GM10248 (cell line): ENCODE measurements at regions of chr11 and their contacts with region 1.

Region 1: DNA sequence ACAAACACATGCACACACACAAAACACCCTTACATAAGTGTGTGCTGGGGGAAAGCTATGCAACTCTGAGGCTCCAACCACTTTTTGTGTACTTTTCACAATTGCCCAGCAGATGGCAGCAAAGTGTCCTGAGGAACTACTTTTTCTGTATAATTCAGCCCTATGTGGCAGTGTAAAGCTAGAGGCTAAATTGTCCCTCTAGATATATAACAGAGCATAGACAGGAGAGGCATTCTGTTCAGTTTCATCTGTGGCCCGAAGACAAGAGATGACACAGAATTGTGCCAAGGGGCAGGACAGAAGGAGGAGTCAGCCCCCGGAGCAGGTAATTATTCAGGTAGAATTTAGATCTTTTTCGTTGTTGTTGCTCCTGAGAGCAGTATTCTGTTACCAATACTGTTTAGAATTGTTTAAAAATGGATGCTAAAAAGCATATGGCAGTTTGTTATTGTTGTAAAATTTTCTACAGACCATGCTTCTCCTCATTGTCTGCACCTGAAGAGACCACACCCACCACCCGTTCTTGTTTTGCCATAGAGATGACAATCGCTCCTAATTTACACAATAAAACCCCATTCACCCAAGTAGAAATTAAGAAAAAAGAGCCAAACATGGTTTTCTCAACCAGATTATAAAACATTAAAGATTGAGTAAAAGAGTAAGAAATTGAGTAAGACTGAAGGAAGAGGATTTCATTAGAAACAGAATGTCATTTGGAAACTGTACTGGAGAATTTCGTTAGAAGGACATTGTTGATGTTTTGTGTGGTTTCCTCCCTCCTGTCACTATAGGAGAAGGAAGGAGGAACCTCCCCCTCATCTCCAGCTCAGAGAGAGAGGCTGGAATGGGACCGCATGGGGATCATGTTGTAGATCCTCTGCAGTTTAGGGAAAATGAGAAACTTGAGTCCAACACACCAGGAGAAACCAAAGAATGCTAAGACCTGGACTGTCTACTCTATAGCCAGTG is 14.5 kb upstream of the MS4A7 start:
- DNase-seq: peak; percentile 60
- CTCF ChIP-seq: peak; percentile 66

Region 2: DNA sequence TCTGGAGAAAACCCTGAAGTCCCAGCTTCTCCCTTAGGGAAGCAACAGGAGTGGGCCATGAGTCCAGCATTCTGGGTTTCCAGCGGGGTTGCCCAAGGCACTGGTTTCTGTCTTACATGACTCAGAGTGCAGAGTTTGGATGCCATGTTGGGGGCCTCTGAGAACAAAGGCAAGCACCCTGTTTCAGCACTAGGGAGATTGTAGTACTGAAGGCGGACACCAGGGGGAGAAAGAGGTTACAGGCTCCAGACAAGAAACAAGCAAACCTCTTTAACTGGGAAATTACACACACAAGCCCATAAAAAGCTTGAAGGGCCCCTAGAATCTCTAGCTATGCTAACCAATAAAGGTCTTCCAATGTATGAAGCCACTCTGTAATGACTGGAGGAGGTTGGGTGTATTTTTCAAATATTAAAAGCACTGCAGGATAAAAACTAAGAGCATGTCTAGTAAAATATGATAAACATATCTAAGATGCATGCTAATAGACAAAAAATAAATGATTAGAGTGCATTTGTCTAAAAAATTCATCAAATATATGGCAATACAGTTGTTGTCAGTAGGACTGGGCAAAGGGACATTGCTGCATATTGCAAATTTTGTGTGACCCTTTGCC is 29.7 kb before region 1 on chr11:
- CTCF ChIA-PET with region 1: interaction called, 10 read pairs
- POLR2A ChIA-PET with region 1: no interaction called
- DNase-seq: peak; percentile 63
- CTCF ChIP-seq: peak; percentile 64

Region 3: DNA sequence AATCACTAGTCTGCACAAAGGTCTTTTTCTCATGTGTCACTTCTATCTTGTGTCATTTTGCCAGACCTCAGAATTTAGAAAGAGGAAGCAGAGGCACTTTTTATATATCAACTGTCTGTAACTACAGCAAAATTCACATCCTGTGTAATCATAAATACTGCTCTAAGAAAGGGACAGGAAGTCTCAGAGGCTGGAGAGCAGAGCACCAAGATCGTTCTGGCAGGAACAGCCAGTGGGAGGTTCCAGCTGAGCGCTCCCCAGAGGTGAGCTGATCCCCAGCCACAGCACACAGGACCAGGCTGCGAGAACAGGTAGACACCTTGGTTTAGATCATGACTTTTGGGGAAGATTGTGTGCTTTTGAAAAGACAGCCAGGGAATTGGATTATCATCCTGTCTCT is 14.5 kb after region 1 on chr11 and contains the start of gene MS4A7:
- CTCF ChIA-PET with region 1: interaction called, 16 read pairs
- POLR2A ChIA-PET with region 1: no interaction called
- DNase-seq: peak; percentile 69
- CTCF ChIP-seq: no peak

Region 4: DNA sequence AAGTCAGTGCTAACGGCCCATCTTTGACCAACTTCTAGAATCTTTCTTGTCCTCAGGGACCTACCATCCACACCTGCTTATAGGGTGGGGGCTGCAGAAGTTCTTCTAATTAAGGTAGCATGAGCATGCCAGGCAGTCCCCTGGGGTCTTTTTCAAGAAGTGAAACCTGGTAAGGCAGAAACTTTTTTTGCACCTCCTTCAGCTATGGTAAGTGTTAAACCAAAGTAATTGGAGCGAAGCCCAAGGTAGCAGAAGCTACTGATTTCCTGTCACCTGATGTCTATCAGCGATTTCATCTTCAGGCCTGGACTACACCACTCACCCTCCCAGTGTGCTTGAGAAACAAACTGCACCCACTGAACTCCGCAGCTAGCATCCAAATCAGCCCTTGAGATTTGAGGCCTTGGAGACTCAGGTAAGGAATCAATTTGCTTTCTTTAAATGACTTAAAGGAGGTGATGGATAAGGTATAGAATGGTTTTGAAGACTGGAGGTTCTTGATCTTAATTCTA is 91.8 kb after region 1 on chr11 and contains the start of gene MS4A1:
- CTCF ChIA-PET with region 1: interaction called, 42 read pairs
- POLR2A ChIA-PET with region 1: no interaction called
- DNase-seq: peak; percentile 66
- CTCF ChIP-seq: no peak

Region 5: GRCh38 chr11:60504219-60504905 is 140.5 kb after region 1 on chr11:
- CTCF ChIA-PET with region 1: interaction called, 16 read pairs
- POLR2A ChIA-PET with region 1: no interaction called
- DNase-seq: no peak
- CTCF ChIP-seq: no peak

Region 6: GRCh38 chr11:60625262-60625661 is 261.4 kb after region 1 on chr11:
- CTCF ChIA-PET with region 1: interaction called, 28 read pairs
- POLR2A ChIA-PET with region 1: no interaction called
- DNase-seq: no peak
- CTCF ChIP-seq: peak; percentile 5

Region 7: GRCh38 chr11:60762851-60763691 is 399.2 kb after region 1 on chr11:
- CTCF ChIA-PET with region 1: interaction called, 15 read pairs
- POLR2A ChIA-PET with region 1: no interaction called
- DNase-seq: peak; percentile 66
- CTCF ChIP-seq: peak; percentile 49